Sciatic nerve (tissue), 2 donors: ENCODE measurements at regions of chr1 and their contacts with region 1.

Region 1: GRCh38 chr1:203039609-203040512 is 13.6 kb downstream of the PPFIA4 start:
- DNase-seq: peak; percentile 53
- ATAC-seq: peak; percentile 9

Region 2: GRCh38 chr1:203216274-203217138 is 176.6 kb after region 1 on chr1:
- intact Hi-C with region 1: loop called (anchors 1 kb)
- DNase-seq: peak; percentile 75
- ATAC-seq: peak; percentile 86

Region 3: GRCh38 chr1:203428981-203429599 is 389.2 kb after region 1 on chr1:
- intact Hi-C with region 1: loop called (anchors 10 kb)
- DNase-seq: no peak
- ATAC-seq: peak; percentile 55

Region 4: DNA sequence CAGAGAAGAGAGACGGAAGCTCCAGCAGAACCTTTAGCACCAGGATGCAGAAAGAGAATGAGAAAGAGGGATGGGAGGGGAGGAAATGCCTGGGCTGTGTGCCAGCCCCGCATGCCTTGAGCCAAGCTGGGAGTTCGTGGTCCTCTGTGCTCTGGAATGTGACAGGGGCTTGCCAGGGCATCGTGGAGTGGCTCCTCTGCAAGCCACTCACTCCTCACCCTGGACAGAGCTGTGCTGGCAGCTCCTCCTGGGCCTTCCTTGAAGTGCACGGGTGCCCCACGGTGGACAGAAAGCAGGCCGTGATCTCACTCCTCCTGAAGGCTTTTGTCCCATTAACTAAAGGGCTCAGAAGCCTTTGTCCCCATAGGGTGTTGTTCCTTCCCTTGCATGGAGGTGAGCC is 400.9 kb after region 1 on chr1:
- intact Hi-C with region 1: no loop called
- DNase-seq: peak; percentile 83
- ATAC-seq: peak; percentile 96